GM12878 (cell line): ENCODE measurements at regions of chr20 and their contacts with region 1.

Region 1: DNA sequence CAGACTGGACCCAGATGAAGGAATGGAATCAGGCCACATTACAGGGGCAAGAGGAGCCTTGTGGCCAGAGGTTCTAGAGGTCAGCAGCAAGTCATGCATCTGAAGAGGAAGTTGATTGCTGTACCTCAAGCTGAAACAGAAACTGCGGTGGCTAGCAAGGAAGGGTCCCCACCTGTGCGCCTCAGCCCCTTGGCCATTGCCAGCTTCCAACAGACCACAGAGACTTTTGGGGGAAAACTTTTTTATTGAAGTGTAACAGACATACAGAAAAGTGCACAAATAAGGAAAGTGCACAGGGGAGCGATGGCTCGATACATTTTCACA is 26.8 kb upstream of the SLC9A8 start:
- DNase-seq: peak; percentile 83
- ATAC-seq: peak; percentile 98
- H3K4me3 ChIP-seq: peak overlapping the region; percentile 56; the same call in 1 of the 2 replicates
- H3K27ac ChIP-seq: peak overlapping the region; percentile 69
- H3K4me1 ChIP-seq: peaks cover 22% of the 10 kb centered on the region
- H3K27me3 ChIP-seq: no peaks in the 10 kb centered on the region
- CTCF ChIP-seq: no peak
- EP300 ChIP-seq: peak; percentile 62 to 76; a peak in 2 of 4 replicates
- POLR2A ChIP-seq: no peak
- RAD21 ChIP-seq: no peak

Region 2: GRCh38 chr20:49750611-49751396 is 35.0 kb before region 1 on chr20:
- CTCF ChIA-PET with region 1: interaction called, 3 read pairs
- POLR2A ChIA-PET with region 1: no interaction called
- RAD21 ChIA-PET with region 1: interaction called, 10 read pairs
- SMC1A ChIA-PET with region 1: interaction called, 5 read pairs
- in situ Hi-C with region 1: no loop called
- intact Hi-C with region 1: loop called (anchors 1 kb)
- DNase-seq: peak; percentile 86
- ATAC-seq: peak; percentile 92
- H3K4me3 ChIP-seq: peak overlapping the region; percentile 52; the same call in 1 of the 2 replicates
- H3K27ac ChIP-seq: peak overlapping the region; percentile 81
- H3K4me1 ChIP-seq: peaks cover 17% of the 10 kb centered on the region
- H3K27me3 ChIP-seq: no peaks in the 10 kb centered on the region
- CTCF ChIP-seq: no peak
- EP300 ChIP-seq: peak; percentile 36 to 54; a peak in 2 of 4 replicates
- POLR2A ChIP-seq: no peak
- RAD21 ChIP-seq: no peak

Region 3: DNA sequence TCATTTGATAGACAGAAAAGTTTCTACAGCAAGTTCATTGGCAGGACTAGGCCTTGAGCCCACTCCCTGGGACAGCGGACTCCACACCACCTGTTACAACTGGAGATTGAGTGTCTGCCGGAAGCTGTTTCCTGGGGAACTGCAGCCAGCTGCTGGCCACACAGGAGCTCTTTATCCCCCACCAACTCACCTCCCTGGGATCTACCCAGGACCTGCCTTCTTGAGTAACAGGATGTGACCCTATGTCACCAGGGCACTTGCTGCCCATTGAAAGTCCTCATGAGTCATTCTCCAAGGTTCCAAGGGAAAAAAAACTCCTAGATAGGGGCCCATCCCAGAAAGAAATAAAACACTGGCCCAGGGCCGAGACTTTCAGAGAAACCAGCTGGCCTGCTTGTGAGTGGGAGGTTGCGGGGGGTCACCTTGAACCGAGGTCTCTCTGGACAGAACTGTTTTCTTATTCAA is 10.6 kb before region 1 on chr20:
- CTCF ChIA-PET with region 1: interaction called, 17 read pairs
- POLR2A ChIA-PET with region 1: interaction called, 34 read pairs
- RAD21 ChIA-PET with region 1: interaction called, 5 read pairs
- SMC1A ChIA-PET with region 1: interaction called, 24 read pairs
- in situ Hi-C with region 1: no loop called
- intact Hi-C with region 1: no loop called
- DNase-seq: no peak
- ATAC-seq: no peak
- H3K4me3 ChIP-seq: no peak overlapping the region
- H3K27ac ChIP-seq: no peak overlapping the region
- H3K4me1 ChIP-seq: peaks cover 11% of the 10 kb centered on the region; the same call in 1 of the 2 replicates
- H3K27me3 ChIP-seq: no peaks in the 10 kb centered on the region
- CTCF ChIP-seq: no peak
- EP300 ChIP-seq: no peak
- POLR2A ChIP-seq: no peak
- RAD21 ChIP-seq: no peak